ENCODE measurements at regions of chr7 and their contacts with region 1.

Region 1: DNA sequence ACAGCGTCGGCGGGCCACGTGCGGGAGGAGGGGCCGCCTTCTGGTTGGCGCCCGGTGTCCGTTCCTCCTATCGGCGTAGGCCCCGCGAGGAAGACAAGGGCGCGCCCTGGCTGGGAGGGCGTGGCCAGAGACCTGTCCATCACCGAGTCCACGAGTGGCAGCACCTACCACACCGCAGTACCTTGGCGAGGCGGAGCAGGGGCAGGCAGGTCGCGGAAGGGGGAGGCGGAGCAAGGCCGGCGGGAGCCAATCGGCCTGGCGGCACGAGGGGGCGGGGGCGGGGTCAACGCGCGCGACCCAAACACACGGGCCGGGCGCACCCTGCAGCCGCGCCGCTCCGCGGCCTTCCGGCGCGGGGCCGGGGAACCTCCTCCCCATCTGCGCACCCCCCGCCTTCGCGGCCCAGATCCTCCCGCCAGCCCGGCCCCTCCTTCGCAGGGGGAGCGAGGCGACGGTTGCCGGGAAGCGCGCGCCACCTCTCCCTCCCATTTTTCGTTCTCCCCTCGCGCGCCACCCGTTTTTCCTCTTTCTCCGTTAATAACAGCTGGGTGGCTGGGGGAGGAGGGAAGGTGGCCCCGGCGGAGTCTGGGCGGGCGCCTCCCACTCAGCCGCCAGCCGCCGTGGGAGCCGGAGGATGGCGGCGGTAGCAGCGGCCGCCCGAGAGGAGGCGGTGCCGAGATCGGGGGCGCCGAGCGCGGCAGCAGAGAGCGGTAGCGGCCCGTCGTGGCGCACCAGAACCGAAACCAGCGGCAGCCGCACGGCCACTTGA is at the start of gene ZNRF2:
- DNase-seq: peak; percentile 87 to 99 (median 93)

Region 2: DNA sequence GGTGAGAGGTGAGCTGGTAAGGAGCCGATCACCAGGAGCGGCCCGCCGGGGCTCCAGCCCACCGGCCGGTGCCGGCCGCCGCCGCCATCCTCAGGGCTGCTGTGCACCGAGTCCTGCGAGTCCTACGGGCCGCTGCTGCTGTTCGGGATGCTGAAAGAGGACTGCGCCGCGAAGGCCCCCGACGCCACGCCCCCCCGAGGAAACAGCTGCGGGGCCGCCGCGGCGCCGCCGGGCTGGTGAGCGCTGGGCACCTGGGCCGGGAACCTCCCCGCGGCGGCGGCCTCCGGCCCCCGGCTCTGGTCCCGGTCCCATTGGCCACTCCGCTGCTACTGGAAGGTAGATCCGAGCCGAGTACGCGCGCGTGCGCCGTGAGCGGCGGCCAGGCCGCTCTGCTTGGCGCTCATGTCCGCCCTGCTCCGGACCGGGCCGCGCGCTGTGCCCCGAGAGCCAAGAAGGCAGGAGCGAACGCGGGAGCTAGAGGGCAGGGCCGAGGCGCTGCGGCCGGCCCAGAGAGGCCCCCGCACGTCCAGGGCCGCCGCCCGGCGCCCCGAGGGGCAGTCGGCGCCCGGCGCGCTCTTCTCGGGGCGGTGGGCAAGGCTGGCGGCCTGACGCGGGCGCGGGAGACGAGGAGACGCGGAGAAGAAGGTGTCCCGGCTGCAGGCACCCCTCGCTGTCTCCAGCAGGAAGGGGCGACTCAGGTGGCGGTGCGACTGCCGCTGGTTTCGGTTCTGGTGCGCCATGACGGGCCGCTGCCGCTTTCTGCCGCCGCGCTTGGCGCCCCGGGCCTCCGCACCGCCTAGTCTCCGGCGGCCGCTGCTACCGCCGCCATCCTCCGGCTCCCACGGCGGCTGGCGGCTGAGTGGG is 599.5 kb before region 1 on chr7:
- intact Hi-C with region 1: loop called (anchors 5 kb)
- DNase-seq: peak; percentile 57 to 95 (median 70)

Region 3: GRCh38 chr7:30173058-30173897 is 111.2 kb before region 1 on chr7:
- intact Hi-C with region 1: loop called (anchors 2 kb)
- DNase-seq: peak; percentile 84 to 99 (median 88)

Region 4: GRCh38 chr7:30504347-30505173 is 220.1 kb after region 1 on chr7 and contains the start of gene GGCT:
- intact Hi-C with region 1: loop called (anchors 2 kb)
- DNase-seq: peak; percentile 99 to 100 (median 99)

Measured in posterior cingulate gyrus (tissue), 11 donors.